ENCODE measurements at regions of chr18 and their contacts with region 1.

Region 1: DNA sequence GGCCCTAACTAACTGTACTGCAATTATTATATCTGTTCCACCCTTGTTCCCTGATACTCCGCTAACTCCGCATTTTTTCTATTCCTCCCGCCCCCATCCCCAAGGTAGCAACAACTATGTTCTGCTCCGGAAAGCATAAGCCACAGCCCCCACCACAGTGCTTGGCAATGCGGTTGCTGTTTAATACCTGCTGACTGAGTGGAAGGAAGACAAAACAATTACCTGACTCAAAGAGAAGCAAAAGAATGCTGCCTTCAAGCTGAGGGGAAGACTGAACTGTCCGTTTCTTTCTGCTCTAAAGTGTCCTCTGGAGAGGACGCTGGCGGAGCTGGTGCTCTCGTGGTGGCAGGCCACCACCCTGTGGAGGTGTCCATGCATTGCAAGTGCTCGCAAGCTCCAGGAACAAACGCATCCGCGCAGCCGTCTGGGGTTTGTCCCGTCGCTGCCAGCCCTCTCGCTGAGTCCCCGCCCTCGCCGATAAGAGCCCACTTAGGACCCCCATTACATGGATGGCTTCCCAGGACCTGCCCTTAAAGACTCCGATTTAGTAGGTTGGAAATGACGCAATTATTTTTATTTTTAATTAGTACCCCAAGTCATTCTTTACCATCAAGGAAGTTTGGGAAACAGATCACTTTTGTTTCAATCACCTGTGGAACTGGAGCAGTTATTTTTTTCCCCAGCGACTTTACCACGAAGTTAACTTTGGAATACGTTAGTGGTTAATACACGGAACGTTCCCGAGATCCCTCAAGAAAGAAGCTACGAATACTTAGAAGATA is 1.6 kb upstream of the MYL12A start:
- DNase-seq: peak; percentile 73 to 88
- ATAC-seq: peak; percentile 65 to 84 (median 68)
- H3K4me3 ChIP-seq: peak overlapping the region; percentile 95
- H3K4me3 Mint-ChIP-seq: peak overlapping the region; percentile 98
- H3K27ac ChIP-seq: peak overlapping the region; percentile 85
- H3K27ac Mint-ChIP-seq: peak overlapping the region; percentile 88
- H3K4me1 ChIP-seq: peaks cover 31% of the 10 kb centered on the region
- H3K4me1 Mint-ChIP-seq: peaks cover 49 to 52% of the 10 kb centered on the region in 2 donors
- H3K27me3 ChIP-seq: no peaks in the 10 kb centered on the region
- H3K27me3 Mint-ChIP-seq: no peaks in the 10 kb centered on the region
- CTCF ChIP-seq: peak; percentile 81

Region 2: GRCh38 chr18:2932247-2933181 is 313.5 kb before region 1 on chr18:
- intact Hi-C with region 1: loop called (anchors 1 kb)
- DNase-seq: peak in 1 of 2 donors; percentile 86
- ATAC-seq: peak; percentile 68 to 79 (median 69)
- H3K4me3 ChIP-seq: no peak overlapping the region
- H3K4me3 Mint-ChIP-seq: no peak overlapping the region
- H3K27ac ChIP-seq: no peak overlapping the region
- H3K27ac Mint-ChIP-seq: peak overlapping the region; percentile 76 to 77
- H3K4me1 ChIP-seq: peaks cover 5% of the 10 kb centered on the region
- H3K4me1 Mint-ChIP-seq: peaks cover 17 to 19% of the 10 kb centered on the region in 2 donors
- H3K27me3 ChIP-seq: no peaks in the 10 kb centered on the region
- H3K27me3 Mint-ChIP-seq: no peaks in the 10 kb centered on the region
- CTCF ChIP-seq: peak; percentile 84

Region 3: GRCh38 chr18:3012964-3013804 is 232.9 kb before region 1 on chr18 and contains the start of gene LPIN2:
- intact Hi-C with region 1: loop called (anchors 2 kb)
- DNase-seq: peak; percentile 92 to 97
- ATAC-seq: peak; percentile 87 to 94 (median 89)
- H3K4me3 ChIP-seq: peak within 1 kb of the TSS; percentile 45
- H3K4me3 Mint-ChIP-seq: peak within 1 kb of the TSS; percentile 95
- H3K27ac ChIP-seq: peak within 1 kb of the TSS; percentile 83
- H3K27ac Mint-ChIP-seq: peak within 1 kb of the TSS; percentile 88
- H3K4me1 ChIP-seq: peaks cover 38% of the 10 kb centered on the region
- H3K4me1 Mint-ChIP-seq: peaks cover 33 to 39% of the 10 kb centered on the region in 2 donors
- H3K27me3 ChIP-seq: no peaks in the 10 kb centered on the region
- H3K27me3 Mint-ChIP-seq: no peaks in the 10 kb centered on the region
- CTCF ChIP-seq: no peak
- total RNA-seq, gene LPIN2: 32.9 to 58.8 (median 57.1) TPM

Region 4: GRCh38 chr18:3151399-3152264 is 94.4 kb before region 1 on chr18:
- intact Hi-C with region 1: loop called (anchors 1 kb)
- DNase-seq: peak in 1 of 2 donors; percentile 61
- ATAC-seq: peak in 2 of 3 donors; percentile 44 to 46
- H3K4me3 ChIP-seq: no peak overlapping the region
- H3K4me3 Mint-ChIP-seq: no peak overlapping the region
- H3K27ac ChIP-seq: no peak overlapping the region
- H3K27ac Mint-ChIP-seq: no peak overlapping the region
- H3K4me1 ChIP-seq: peaks cover 3% of the 10 kb centered on the region
- H3K4me1 Mint-ChIP-seq: peaks cover 0 to 4% of the 10 kb centered on the region in 2 donors
- H3K27me3 ChIP-seq: no peaks in the 10 kb centered on the region
- H3K27me3 Mint-ChIP-seq: no peaks in the 10 kb centered on the region
- CTCF ChIP-seq: peak; percentile 94

Region 5: DNA sequence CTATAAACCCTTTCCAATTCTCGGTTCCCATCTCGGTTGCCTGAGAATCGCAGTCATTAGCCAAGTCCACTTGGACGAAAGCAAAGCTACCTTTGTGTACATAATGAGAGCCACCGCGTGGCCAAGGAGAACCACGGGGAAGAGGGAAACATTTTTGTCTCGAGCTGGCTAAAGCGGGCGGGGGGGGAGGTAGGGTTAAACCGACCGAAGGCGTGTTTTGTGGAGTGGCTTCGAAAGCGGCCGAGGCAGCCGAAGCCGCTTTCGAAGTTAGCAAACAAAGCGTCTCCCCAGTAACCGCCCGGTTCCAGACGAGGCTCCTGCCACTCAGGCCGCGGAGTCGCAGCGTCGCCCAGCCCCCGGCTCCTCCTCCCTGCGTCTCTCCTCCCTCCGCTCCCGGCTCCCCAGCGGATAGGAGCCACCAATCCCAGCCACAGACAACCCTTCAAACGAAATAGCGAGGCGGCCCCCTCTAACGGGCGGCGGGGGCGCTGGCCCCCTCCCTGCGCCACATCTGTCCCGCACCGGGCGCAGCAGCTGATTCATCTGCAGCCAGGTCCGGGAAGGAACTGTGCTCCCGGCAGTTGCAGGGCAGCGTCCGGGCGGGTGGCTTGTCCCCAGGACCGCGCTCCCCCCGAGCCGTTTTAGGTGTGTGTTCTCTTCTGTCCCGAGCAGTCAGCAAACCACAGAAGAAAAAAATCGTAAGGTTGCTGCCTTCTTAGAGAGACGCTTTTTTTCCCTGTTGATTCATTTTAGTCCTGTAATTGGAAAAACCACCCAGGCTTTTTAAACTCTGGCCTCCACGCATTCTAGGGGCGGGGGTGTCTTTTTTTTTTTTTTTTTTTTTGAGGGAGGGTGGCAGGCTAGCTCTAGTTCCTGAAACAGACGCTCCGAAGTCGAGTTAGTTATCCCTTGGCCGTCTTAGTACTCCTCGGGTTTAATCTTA is 202.1 kb after region 1 on chr18:
- intact Hi-C with region 1: loop called (anchors 1 kb)
- DNase-seq: peak; percentile 81 to 93
- ATAC-seq: peak; percentile 46 to 68 (median 57)
- H3K4me3 ChIP-seq: peak overlapping the region; percentile 91
- H3K4me3 Mint-ChIP-seq: peak overlapping the region; percentile 97
- H3K27ac ChIP-seq: peak overlapping the region; percentile 97
- H3K27ac Mint-ChIP-seq: peak overlapping the region; percentile 99 to 100
- H3K4me1 ChIP-seq: peaks cover 39% of the 10 kb centered on the region
- H3K4me1 Mint-ChIP-seq: peaks cover 29 to 44% of the 10 kb centered on the region in 2 donors
- H3K27me3 ChIP-seq: no peaks in the 10 kb centered on the region
- H3K27me3 Mint-ChIP-seq: no peaks in the 10 kb centered on the region
- CTCF ChIP-seq: no peak

Measured in natural killer cell (primary cell).